Left cardiac atrium (tissue), 4 donors: ENCODE measurements at regions of chr17 and their contacts with region 1.

Region 1: DNA sequence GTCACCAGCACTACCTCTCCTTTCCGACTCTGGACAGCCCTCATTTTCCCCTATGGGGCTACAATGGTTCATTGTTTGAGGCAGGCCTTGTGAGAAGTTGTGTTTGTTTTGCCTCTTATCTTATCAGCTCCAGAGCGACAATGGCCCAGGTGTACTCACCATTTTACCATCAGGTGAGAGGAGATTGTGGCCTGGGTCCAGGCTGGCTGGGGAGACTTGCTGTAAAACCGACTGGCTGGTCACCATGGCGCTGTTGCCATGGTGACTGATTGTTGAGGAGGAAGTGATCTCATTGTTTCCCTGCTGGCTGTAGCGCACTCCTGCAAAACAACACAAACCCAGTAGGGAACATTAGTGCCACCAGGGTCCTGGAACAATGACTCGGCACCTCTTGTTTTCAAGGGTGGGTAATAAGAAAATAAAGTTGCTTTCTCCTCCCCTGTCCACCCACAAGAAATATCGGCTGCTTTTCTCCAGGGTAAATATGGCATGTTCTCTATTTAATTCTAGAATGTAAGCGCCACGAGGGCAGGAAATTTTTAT is 34.4 kb downstream of the HNF1B start:
- DNase-seq: peak; percentile 51
- ATAC-seq: peak in 1 of 2 donors; percentile 34

Region 2: DNA sequence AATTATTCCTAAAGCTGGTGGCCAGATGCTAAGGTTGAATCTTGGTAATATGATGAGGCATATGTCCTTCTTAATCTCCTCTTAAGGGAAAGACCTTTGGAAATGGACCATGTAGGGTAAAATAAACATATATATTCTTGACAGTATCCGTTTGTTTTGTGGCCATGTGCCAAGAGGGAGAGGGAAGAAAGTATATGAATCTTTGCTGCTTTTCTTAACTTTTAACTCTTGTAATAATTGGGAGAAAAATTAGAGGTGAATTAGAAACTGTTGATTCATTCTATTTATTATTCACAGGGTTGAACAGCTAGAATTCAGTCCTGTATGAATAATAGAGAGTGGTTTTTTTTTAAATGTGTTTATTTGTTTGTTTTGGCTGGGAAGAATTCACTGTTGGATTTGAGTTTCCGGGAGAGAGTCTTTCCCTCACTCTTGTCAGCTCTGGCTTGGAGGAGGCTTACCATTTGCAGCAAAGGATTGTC is 730.1 kb before region 1 on chr17:
- intact Hi-C with region 1: no loop called
- DNase-seq: no peak
- ATAC-seq: no peak

Region 3: GRCh38 chr17:37661400-37662014 is 48.9 kb before region 1 on chr17:
- intact Hi-C with region 1: loop called in 1 of 2 experiments (anchors 10 kb)
- DNase-seq: no peak
- ATAC-seq: no peak

Region 4: DNA sequence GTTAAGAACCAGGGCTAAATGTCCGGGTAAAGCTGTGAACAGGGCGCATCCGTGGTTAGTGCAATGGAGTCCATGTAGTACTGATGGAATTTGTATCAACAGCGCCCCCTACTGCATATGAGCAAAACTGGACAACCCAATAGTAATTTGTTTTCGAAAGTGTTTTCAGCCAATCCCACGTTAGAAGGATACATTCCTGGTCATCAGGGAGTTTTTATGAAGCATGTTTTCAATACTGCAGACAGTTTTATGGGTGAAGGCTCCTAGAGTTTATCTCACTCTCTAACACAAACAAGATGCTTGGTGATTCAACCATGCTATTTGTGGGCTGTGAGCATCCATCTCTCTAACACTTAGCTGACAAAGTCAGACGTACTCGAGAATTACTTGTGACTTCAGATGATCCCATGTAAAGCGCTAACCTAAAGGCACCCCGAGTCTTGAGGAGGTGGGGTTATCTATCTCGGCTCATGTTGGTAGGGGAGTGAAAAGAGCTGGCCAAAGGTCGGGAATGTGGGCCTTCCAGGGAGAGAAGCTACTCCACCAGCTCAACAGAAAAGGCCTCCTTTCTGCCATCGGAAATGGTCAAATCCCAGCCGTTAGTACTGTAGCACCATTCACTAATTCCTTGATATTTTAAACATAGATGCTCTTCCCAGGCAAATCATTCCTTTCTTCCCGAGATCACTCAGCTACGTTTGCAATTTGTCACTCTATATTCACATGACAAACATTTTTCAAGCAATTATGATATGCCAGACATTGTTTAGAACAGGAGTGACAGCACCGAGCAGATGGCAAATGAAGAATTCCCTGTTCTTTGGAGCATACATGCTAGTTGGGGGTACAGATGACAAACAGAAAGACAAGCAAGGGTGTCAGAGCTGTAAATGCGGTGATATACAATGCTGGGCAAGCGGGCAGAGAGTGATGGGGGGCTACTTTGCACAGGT is 81.3 kb after region 1 on chr17:
- intact Hi-C with region 1: no loop called
- DNase-seq: no peak
- ATAC-seq: no peak